ENCODE measurements at regions of chr19 and their contacts with region 1.

Region 1: DNA sequence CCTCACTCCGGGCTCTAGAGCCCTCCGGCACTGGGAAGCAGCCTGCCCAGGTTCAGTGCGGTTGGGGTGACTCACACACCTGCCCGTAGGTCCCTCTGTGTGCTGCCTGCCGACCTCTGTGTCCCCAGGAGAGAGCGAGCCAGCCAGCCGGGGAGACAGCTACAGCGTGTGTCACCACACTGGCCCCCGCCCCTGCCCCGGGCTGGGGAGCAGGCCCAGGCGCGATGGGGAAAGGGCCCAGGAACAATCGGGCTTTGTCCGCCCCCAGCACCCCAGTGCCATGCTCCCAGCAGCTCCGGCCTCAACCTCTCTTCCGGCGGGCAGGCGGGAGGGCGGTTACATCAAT is at the start of gene KLK6:
- DNase-seq: peak; percentile 76
- ATAC-seq: peak; percentile 91
- H3K4me3 ChIP-seq: peak within 1 kb of the TSS; percentile 37 to 53
- H3K27ac ChIP-seq: peak within 1 kb of the TSS; percentile 95
- H3K4me1 ChIP-seq: peaks cover 42 to 86% of the 10 kb centered on the region in 2 experiments
- H3K27me3 ChIP-seq: no peaks in the 10 kb centered on the region
- CTCF ChIP-seq: no peak
- POLR2A ChIP-seq: no peak
- RAD21 ChIP-seq: no peak; the same call in 1 of the 2 replicates
- total RNA-seq, gene KLK6: 40.5 TPM

Region 2: DNA sequence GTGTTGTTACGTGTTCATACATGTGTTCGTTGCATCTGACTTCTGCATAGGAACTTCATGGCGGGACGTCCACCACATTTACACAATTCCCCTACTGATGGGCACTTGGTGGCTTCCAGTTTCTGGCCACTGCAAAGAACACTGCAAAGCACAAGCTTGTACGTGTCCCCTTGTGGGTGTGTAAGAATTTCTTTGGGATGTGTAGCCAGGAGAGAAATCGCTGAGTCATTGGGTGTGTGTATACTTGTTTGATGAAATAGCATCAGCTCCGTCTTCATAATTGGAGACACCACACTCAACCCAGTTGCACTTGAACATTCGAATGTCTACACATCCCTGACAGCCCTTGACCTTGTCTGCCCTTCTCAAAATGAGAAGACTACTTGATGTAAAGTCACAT is 35.7 kb before region 1 on chr19:
- CTCF ChIA-PET with region 1: no interaction called
- POLR2A ChIA-PET with region 1: interaction called, 3 read pairs
- RAD21 ChIA-PET with region 1: interaction called, 3 to 4 read pairs
- intact Hi-C with region 1: loop called (anchors 2 kb)
- DNase-seq: no peak
- ATAC-seq: no peak
- H3K4me3 ChIP-seq: peak overlapping the region in 1 of 2 experiments; percentile 1; a peak in 1 of 4 replicates
- H3K27ac ChIP-seq: peak overlapping the region; percentile 78
- H3K4me1 ChIP-seq: peaks cover 47 to 54% of the 10 kb centered on the region in 2 experiments
- H3K27me3 ChIP-seq: no peaks in the 10 kb centered on the region
- CTCF ChIP-seq: no peak
- POLR2A ChIP-seq: no peak
- RAD21 ChIP-seq: 0 out of 2 replicates have a peak, but pooled peaks have one; percentile 5

Region 3: DNA sequence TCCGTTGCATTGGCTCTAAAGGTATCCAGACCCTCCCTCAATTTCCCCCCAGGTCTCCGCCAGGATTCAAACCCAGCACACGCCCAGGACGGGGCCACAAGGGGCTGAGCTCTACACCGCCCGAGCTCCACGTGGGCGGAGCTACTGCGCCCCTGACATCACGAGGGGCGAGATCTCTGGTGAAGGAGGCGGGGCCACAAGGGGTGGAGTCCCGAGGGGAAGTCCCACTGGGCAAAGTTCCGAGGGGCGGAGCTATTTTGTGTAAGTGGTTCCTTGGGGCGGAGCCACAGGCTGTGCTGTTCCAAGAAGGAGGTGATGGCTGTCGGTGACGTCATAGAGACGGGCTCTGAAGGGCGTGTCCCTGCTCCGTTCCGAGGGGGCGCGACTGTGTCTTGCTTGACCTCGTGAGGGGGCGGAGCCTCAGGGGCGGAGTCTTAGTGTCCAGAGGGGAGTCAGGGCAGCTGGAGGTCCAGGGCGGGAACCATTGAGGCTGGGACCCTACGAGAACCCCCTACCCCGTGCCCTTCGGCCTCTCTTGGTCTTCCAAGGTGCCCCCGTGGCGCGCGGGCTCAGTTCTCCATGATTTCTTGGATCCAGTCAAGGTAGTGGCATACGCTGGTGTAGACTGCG is 33.3 kb after region 1 on chr19:
- CTCF ChIA-PET with region 1: no interaction called
- POLR2A ChIA-PET with region 1: interaction called, 4 read pairs
- RAD21 ChIA-PET with region 1: no interaction called
- intact Hi-C with region 1: loop called (anchors 5 kb)
- DNase-seq: peak; percentile 99
- ATAC-seq: peak; percentile 86
- H3K4me3 ChIP-seq: peak overlapping the region; percentile 78 to 88
- H3K27ac ChIP-seq: peak overlapping the region; percentile 77
- H3K4me1 ChIP-seq: peaks cover 16 to 36% of the 10 kb centered on the region in 2 experiments
- H3K27me3 ChIP-seq: no peaks in the 10 kb centered on the region
- CTCF ChIP-seq: no peak
- POLR2A ChIP-seq: no peak
- RAD21 ChIP-seq: no peak

Measured in HCT116 (cell line).